Caco-2 (cell line): ENCODE measurements at regions of chr7 and their contacts with region 1.

Region 1: GRCh38 chr7:83201355-83201754 is 38.7 kb upstream of the PCLO start:
- DNase-seq: peak in 1 of 2 experiments; percentile 30
- H3K4me3 ChIP-seq: no peak overlapping the region
- H3K4me3 Mint-ChIP-seq: no peak overlapping the region
- H3K27ac Mint-ChIP-seq: no peak overlapping the region
- H3K4me1 ChIP-seq: no peaks in the 10 kb centered on the region
- H3K4me1 Mint-ChIP-seq: no peaks in the 10 kb centered on the region
- H3K27me3 ChIP-seq: no peaks in the 10 kb centered on the region
- H3K27me3 Mint-ChIP-seq: peaks cover 4% of the 10 kb centered on the region
- CTCF ChIP-seq: no peak

Region 2: DNA sequence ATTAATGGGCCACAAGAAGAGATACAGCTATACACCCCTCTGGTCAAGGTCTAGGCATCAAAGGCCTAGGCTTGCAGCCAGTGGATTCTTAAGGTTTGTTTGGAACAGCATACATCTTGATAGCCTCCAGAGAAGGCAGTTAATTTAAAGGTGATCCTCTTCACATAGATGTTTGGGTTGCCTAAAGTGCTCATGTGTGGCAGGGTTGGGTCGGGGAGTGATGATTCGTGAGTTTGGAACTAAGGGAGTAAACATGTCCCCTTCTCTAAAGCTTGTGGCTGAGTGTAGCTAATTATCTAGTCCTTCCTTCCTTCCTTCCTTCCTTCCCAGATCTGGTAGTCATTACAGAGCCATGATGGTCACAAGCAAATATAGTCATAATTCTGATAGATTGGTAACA is 51.0 kb before region 1 on chr7:
- CTCF ChIA-PET with region 1: no interaction called
- POLR2A ChIA-PET with region 1: no interaction called
- intact Hi-C with region 1: loop called (anchors 2 kb)
- DNase-seq: no peak
- H3K4me3 ChIP-seq: no peak overlapping the region
- H3K4me3 Mint-ChIP-seq: no peak overlapping the region
- H3K27ac Mint-ChIP-seq: no peak overlapping the region
- H3K4me1 ChIP-seq: no peaks in the 10 kb centered on the region
- H3K4me1 Mint-ChIP-seq: peaks cover 6% of the 10 kb centered on the region
- H3K27me3 ChIP-seq: no peaks in the 10 kb centered on the region
- H3K27me3 Mint-ChIP-seq: no peaks in the 10 kb centered on the region
- CTCF ChIP-seq: no peak

Region 3: GRCh38 chr7:83468251-83468739 is 266.9 kb after region 1 on chr7:
- CTCF ChIA-PET with region 1: no interaction called
- POLR2A ChIA-PET with region 1: no interaction called
- intact Hi-C with region 1: no loop called
- DNase-seq: peak; percentile 35 to 60
- H3K4me3 ChIP-seq: no peak overlapping the region
- H3K4me3 Mint-ChIP-seq: no peak overlapping the region
- H3K27ac Mint-ChIP-seq: no peak overlapping the region
- H3K4me1 ChIP-seq: no peaks in the 10 kb centered on the region
- H3K4me1 Mint-ChIP-seq: no peaks in the 10 kb centered on the region
- H3K27me3 ChIP-seq: no peaks in the 10 kb centered on the region
- H3K27me3 Mint-ChIP-seq: no peaks in the 10 kb centered on the region
- CTCF ChIP-seq: no peak